ENCODE measurements at regions of chr7 and their contacts with region 1.

Region 1: DNA sequence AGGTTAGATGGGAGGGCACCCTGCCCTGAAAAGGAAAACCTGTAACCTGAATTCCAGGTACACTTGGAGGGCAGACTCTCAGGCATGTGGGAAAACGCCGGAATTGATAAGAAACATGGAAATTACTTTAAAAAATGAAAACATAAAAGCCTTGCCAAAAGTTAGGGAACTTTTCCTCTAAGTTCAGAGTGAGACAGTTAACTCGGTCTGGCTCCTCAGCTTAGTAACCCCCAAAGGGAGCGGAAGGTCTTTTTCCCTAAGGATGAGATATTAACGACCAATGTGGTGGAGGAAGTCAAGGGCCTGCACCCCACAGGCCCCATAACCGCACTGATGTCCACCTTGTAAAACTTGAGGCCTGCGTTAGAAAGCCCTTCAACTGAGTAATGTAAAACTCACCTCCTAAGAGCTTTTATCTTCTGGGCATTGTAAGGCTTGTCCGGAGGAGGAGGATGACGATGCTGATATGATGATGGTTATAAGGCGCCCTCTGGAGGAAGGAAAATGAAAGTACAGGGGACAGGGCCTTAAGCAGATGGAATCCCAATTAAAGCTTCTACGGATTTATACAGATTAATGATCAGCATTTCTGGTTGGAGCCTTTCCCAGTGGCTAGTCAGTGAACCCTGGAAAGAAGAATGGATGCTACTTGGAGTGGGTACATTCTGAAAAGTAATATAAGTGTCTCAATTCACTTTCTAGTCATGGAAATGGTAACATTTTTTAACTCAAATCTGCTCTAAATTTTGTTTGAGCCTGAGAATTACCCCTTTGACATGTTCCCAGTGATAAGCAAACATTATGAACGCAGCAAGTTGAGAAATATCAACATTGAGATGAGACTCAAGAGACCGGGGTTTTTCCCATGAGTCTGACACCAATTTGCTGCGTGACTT is 694 bp downstream of the COL1A2 start:
- DNase-seq: peak in 3 of 9 donors; percentile 28 to 57 (median 29)
- ATAC-seq: peak; percentile 63
- H3K4me3 ChIP-seq: no peak overlapping the region
- H3K4me3 Mint-ChIP-seq: peak overlapping the region; percentile 17 to 95 (median 70)
- H3K27ac ChIP-seq: no peak overlapping the region
- H3K27ac Mint-ChIP-seq: peak overlapping the region in 3 of 9 donors; percentile 42 to 91 (median 68)
- H3K4me1 ChIP-seq: no peaks in the 10 kb centered on the region
- H3K4me1 Mint-ChIP-seq: peaks cover 6 to 39% (median 13%) of the 10 kb centered on the region in 7 donors
- H3K27me3 ChIP-seq: peaks cover 0 to 9% of the 10 kb centered on the region in 2 donors
- H3K27me3 Mint-ChIP-seq: peaks cover 0 to 70% (median 53%) of the 10 kb centered on the region in 5 donors

Region 2: DNA sequence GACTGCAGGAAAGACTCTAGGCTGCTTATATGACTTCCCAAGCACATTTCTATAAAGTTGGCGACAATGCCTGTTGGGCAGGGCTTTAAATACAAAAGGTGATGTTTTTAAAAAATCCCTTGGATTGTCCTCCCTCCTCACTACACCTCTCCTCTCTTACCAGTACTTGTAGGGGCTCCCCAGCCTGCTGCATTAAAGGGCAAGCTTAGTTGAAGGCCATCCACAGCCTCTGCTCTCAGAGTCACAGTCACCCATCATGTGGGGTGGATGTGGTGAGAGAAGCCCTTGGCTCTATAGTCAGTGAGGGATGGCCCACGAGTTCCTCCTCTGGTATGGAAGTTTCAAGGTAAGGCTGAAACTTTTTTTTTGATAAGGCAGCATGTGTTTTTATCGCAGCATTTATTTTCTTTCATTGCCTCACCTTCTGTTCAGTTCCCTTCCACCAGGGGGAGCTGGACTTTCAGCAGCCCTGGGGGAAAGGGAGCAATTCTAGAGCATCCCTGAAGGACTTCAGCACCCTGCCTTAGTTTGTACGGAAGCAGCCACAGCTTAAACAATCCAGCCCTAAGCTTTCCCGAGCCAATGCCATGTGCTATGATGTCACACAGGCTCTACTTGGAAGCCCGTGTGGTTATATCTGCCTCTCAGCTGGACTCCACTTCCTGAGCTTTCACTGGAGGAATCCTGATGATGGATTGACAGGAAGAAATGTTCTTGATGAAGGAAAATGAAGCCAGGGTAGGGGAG is 952.7 kb before region 1 on chr7:
- CTCF ChIA-PET with region 1: no interaction called
- POLR2A ChIA-PET with region 1: no interaction called
- intact Hi-C with region 1: loop called in 1 of 2 experiments (anchors 1 kb)
- DNase-seq: peak in 6 of 9 donors; percentile 2 to 34 (median 13)
- ATAC-seq: peak; percentile 34
- H3K4me3 ChIP-seq: no peak overlapping the region
- H3K4me3 Mint-ChIP-seq: no peak overlapping the region
- H3K27ac ChIP-seq: no peak overlapping the region
- H3K27ac Mint-ChIP-seq: no peak overlapping the region
- H3K4me1 ChIP-seq: no peaks in the 10 kb centered on the region
- H3K4me1 Mint-ChIP-seq: no peaks in the 10 kb centered on the region
- H3K27me3 ChIP-seq: no peaks in the 10 kb centered on the region
- H3K27me3 Mint-ChIP-seq: peaks cover 0 to 4% (median 0%) of the 10 kb centered on the region in 5 donors

Region 3: DNA sequence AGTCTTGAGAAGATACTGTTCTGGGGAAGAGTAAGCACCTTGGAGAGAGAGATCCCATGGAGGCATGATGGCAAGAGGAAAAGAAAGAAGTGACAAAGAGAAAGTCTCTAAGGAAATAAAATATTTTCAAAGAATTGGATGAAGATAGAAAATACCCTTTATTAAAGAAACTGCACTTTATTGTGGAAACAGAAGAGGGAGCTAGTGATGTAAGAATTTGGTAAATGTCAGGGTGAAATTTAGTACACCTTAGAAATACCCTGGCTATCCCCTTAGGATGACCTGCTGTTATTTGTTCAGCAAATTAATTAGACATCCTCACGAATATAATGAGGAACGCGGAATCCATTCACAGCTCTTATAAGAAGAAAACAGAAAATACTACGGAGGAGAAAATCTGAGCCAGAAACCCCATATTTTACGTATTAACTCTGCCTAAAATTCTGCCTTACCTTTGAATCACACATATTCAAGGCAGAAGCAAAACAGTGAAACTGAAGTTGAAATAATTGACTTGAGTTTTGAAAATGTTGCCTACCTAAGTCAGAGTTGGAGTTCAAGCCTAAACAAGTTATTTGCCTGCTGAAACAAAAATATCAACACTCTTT is 595.5 kb before region 1 on chr7:
- CTCF ChIA-PET with region 1: no interaction called
- POLR2A ChIA-PET with region 1: no interaction called
- intact Hi-C with region 1: loop called in 1 of 2 experiments (anchors 5 kb)
- DNase-seq: no peak
- ATAC-seq: no peak
- H3K4me3 ChIP-seq: no peak overlapping the region
- H3K4me3 Mint-ChIP-seq: no peak overlapping the region
- H3K27ac ChIP-seq: no peak overlapping the region
- H3K27ac Mint-ChIP-seq: no peak overlapping the region
- H3K4me1 ChIP-seq: no peaks in the 10 kb centered on the region
- H3K4me1 Mint-ChIP-seq: no peaks in the 10 kb centered on the region
- H3K27me3 ChIP-seq: no peaks in the 10 kb centered on the region
- H3K27me3 Mint-ChIP-seq: no peaks in the 10 kb centered on the region

Region 4: DNA sequence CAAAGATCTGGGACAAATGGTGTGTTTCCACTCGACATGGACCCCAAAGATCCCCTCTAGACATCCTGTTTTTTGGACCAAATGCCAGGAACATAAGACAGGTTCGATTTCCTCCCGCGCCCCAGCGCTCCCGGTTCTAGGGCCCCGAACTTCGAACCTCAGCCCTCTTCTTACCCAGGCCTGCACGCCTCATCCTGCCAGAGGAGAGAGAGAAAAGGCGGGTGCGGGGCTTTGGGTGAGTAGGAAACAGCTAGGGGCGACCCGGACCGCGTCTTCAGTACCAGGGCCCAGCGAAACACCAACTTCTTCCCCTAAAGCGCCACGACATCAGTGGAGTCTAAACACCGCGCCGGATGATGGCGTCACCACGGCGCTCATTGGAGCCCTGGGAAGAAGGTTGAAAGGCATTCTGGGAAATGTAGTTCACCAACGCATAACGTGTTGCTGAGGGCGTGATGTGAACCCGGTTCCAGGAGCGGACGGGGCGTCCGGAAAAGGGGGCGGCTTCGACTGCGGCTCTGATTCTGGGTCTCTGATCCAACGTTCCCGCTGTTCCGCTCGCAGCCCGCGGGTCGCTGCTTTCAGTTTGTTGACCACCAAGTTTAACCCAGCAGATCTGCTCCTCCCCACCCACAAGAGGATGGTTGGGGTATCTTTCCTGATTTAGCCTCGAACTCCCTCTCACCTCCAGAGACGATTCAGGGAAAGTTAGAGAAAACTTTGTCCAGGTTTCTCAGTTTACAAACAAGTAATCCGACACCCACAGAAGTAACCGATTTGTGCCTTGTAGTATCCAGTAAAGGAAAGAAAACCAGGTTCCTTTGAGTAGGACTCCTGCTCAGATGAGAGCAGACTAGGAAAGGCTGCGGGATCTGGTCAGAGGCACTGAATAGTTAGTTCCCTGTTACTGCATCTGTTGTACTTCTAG is 391.1 kb before region 1 on chr7 and contains the start of gene BET1:
- CTCF ChIA-PET with region 1: no interaction called
- POLR2A ChIA-PET with region 1: no interaction called
- intact Hi-C with region 1: loop called in 1 of 2 experiments (anchors 1 kb)
- DNase-seq: peak; percentile 87 to 96 (median 92)
- ATAC-seq: peak; percentile 98
- H3K4me3 ChIP-seq: peak within 1 kb of the TSS; percentile 75
- H3K4me3 Mint-ChIP-seq: peak within 1 kb of the TSS; percentile 88 to 100 (median 99)
- H3K27ac ChIP-seq: peak within 1 kb of the TSS; percentile 91
- H3K27ac Mint-ChIP-seq: peak within 1 kb of the TSS; percentile 95 to 100 (median 99)
- H3K4me1 ChIP-seq: peaks cover 3 to 17% of the 10 kb centered on the region in 2 donors
- H3K4me1 Mint-ChIP-seq: peaks cover 22 to 56% (median 51%) of the 10 kb centered on the region in 7 donors
- H3K27me3 ChIP-seq: no peaks in the 10 kb centered on the region
- H3K27me3 Mint-ChIP-seq: peaks cover 0 to 28% (median 11%) of the 10 kb centered on the region in 5 donors
- total RNA-seq, gene BET1: 9.9 to 37.6 (median 25.2) TPM

Region 5: DNA sequence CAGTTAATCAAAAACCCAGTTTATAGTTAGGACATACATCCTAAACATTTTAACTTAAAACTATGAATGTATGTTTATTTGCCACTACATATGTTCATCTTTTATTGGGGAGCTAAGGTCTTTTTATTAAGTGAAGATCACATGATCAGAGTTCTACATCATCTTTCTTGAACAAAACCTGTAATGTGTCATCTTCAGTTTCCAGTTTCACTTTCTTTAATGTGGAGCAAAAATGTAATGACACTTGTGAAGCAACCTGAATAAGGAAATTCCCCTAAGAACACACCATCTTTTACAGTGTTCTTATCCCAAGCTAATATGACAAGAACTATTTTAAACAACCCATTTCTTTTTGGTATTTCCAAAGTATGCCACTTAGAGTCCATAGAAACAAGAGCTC is 224.6 kb before region 1 on chr7:
- CTCF ChIA-PET with region 1: no interaction called
- POLR2A ChIA-PET with region 1: no interaction called
- intact Hi-C with region 1: loop called in 1 of 2 experiments (anchors 5 kb)
- DNase-seq: peak in 1 of 9 donors; percentile 1
- ATAC-seq: no peak
- H3K4me3 ChIP-seq: no peak overlapping the region
- H3K4me3 Mint-ChIP-seq: no peak overlapping the region
- H3K27ac ChIP-seq: no peak overlapping the region
- H3K27ac Mint-ChIP-seq: no peak overlapping the region
- H3K4me1 ChIP-seq: no peaks in the 10 kb centered on the region
- H3K4me1 Mint-ChIP-seq: peaks cover 0 to 7% (median 0%) of the 10 kb centered on the region in 7 donors
- H3K27me3 ChIP-seq: no peaks in the 10 kb centered on the region
- H3K27me3 Mint-ChIP-seq: peaks cover 0 to 9% (median 2%) of the 10 kb centered on the region in 5 donors

Region 6: DNA sequence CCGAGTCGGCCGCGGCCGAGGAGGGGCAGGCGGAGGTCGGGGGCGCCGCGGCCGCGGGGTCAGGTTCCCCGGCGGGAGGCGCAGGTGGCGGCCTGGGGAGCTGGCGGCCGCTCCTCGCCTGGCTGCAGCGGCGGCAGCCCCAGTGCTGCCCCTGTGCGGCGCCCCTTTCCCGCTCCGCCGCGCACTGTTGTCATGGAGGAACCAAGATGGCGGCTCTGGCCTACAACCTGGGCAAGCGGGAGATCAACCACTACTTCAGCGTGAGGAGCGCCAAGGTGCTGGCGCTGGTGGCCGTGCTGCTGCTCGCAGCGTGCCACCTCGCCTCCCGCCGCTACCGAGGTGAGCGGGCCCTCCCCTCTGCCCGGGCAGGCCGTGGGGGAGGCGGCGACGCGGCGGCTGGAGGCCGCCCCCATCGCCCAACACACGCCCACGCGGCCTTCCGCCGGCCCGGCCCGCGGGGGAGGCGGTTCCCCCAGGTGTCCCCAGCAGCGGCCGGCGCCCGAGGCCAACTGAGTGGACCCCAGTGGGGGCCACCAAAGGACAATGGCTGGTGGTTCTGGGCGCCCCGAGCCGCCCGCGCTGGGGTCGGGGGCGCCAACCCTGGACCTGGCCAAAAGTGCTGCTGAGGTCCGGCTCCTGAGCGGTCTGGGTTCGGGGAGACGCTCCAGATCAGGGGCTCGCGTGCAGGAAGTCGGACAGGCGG is 114.6 kb after region 1 on chr7:
- CTCF ChIA-PET with region 1: no interaction called
- POLR2A ChIA-PET with region 1: no interaction called
- intact Hi-C with region 1: loop called in 1 of 2 experiments (anchors 2 kb)
- DNase-seq: peak; percentile 51 to 75 (median 69)
- ATAC-seq: peak; percentile 90
- H3K4me3 ChIP-seq: peak overlapping the region; percentile 74
- H3K4me3 Mint-ChIP-seq: peak overlapping the region in 7 of 10 donors; percentile 75 to 93 (median 88)
- H3K27ac ChIP-seq: peak overlapping the region; percentile 90
- H3K27ac Mint-ChIP-seq: peak overlapping the region in 7 of 9 donors; percentile 70 to 94 (median 92)
- H3K4me1 ChIP-seq: peaks cover 17 to 22% of the 10 kb centered on the region in 2 donors
- H3K4me1 Mint-ChIP-seq: peaks cover 27 to 52% (median 42%) of the 10 kb centered on the region in 7 donors
- H3K27me3 ChIP-seq: no peaks in the 10 kb centered on the region
- H3K27me3 Mint-ChIP-seq: no peaks in the 10 kb centered on the region

Measured in naive thymus-derived CD4-positive, alpha-beta T cell (primary cell).